HAP-1 (cell line): ENCODE measurements at regions of chr9 and their contacts with region 1.

Region 1: GRCh38 chr9:22008736-22009562 is at the start of gene CDKN2B:
- DNase-seq: peak; percentile 93 to 98
- H3K4me3 ChIP-seq: peak within 1 kb of the TSS; percentile 59
- H3K4me1 ChIP-seq: peaks cover 9% of the 10 kb centered on the region
- H3K27me3 ChIP-seq: no peaks in the 10 kb centered on the region

Region 2: GRCh38 chr9:22244141-22245011 is 235.4 kb after region 1 on chr9:
- in situ Hi-C with region 1: loop called (anchors 25 kb)
- DNase-seq: peak; percentile 53 to 73
- H3K4me3 ChIP-seq: no peak overlapping the region
- H3K4me1 ChIP-seq: peaks cover 13% of the 10 kb centered on the region
- H3K27me3 ChIP-seq: peaks cover 2% of the 10 kb centered on the region; the same call in 1 of the 2 replicates